MCF 10A (cell line): ENCODE measurements at regions of chr20 and their contacts with region 1.

Region 1: GRCh38 chr20:50070991-50071888 is 41.7 kb downstream of the UBE2V1 start:
- DNase-seq: peak; percentile 82
- H3K4me3 Mint-ChIP-seq: peak overlapping the region; percentile 50
- H3K27ac Mint-ChIP-seq: no peak overlapping the region
- H3K4me1 Mint-ChIP-seq: peaks cover 6% of the 10 kb centered on the region
- H3K27me3 Mint-ChIP-seq: no peaks in the 10 kb centered on the region
- CTCF ChIP-seq: peak; percentile 98

Region 2: GRCh38 chr20:49948809-49949548 is 122.3 kb before region 1 on chr20:
- CTCF ChIA-PET with region 1: interaction called, 10 read pairs
- POLR2A ChIA-PET with region 1: no interaction called
- intact Hi-C with region 1: no loop called
- DNase-seq: no peak
- H3K4me3 Mint-ChIP-seq: no peak overlapping the region
- H3K27ac Mint-ChIP-seq: no peak overlapping the region
- H3K4me1 Mint-ChIP-seq: peaks cover 11% of the 10 kb centered on the region
- H3K27me3 Mint-ChIP-seq: no peaks in the 10 kb centered on the region
- CTCF ChIP-seq: no peak

Region 3: GRCh38 chr20:49989234-49990065 is 81.8 kb before region 1 on chr20:
- CTCF ChIA-PET with region 1: interaction called, 78 read pairs
- POLR2A ChIA-PET with region 1: no interaction called
- intact Hi-C with region 1: no loop called
- DNase-seq: no peak
- H3K4me3 Mint-ChIP-seq: no peak overlapping the region
- H3K27ac Mint-ChIP-seq: no peak overlapping the region
- H3K4me1 Mint-ChIP-seq: peaks cover 4% of the 10 kb centered on the region
- H3K27me3 Mint-ChIP-seq: no peaks in the 10 kb centered on the region
- CTCF ChIP-seq: no peak

Region 4: DNA sequence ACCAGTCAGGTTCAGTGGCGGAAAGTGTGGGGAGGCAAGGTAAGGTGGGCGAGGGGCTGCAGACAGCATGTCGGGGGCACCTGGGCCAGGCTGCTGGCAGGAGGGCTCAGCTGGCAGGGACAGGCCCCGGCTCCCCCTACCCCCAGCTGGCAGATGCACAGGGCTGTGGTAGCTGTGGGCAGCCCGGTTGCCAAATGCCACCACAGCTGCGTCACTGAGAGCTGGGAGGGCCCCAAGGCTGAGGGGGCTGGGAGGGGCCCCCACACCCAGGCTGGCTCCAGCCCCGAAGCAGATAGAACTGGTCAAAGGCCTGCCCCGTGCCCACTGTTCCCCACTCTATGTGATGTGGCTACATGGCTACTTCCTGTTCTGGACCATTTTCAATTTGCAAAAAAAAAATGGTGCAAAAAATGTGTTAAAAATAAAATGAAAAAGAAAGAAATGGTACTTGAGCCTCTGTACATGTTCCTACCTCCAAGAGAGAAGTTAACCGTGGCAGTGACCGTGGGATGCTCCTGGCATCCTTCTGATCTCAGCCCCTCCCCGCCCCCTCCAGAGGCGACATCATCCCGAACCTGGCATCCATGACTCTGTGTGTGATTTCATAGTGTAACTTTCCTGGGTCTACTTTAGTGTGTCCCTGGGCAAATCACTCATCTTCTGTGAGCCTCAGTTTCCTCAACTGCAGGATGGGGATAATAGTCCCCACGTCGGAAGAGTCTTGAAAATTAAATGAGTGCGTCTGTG is 22.6 kb before region 1 on chr20:
- CTCF ChIA-PET with region 1: interaction called, 12 read pairs
- POLR2A ChIA-PET with region 1: no interaction called
- intact Hi-C with region 1: no loop called
- DNase-seq: peak; percentile 64
- H3K4me3 Mint-ChIP-seq: no peak overlapping the region
- H3K27ac Mint-ChIP-seq: no peak overlapping the region
- H3K4me1 Mint-ChIP-seq: no peaks in the 10 kb centered on the region
- H3K27me3 Mint-ChIP-seq: no peaks in the 10 kb centered on the region
- CTCF ChIP-seq: no peak

Region 5: GRCh38 chr20:50095476-50096078 is 24.3 kb after region 1 on chr20:
- CTCF ChIA-PET with region 1: interaction called, 21 read pairs
- POLR2A ChIA-PET with region 1: no interaction called
- intact Hi-C with region 1: no loop called
- DNase-seq: no peak
- H3K4me3 Mint-ChIP-seq: no peak overlapping the region
- H3K27ac Mint-ChIP-seq: no peak overlapping the region
- H3K4me1 Mint-ChIP-seq: peaks cover 23% of the 10 kb centered on the region
- H3K27me3 Mint-ChIP-seq: no peaks in the 10 kb centered on the region
- CTCF ChIP-seq: no peak

Region 6: GRCh38 chr20:50126691-50127116 is 55.5 kb after region 1 on chr20:
- CTCF ChIA-PET with region 1: no interaction called
- POLR2A ChIA-PET with region 1: no interaction called
- intact Hi-C with region 1: no loop called
- DNase-seq: no peak
- H3K4me3 Mint-ChIP-seq: no peak overlapping the region
- H3K27ac Mint-ChIP-seq: peak overlapping the region; percentile 36
- H3K4me1 Mint-ChIP-seq: peaks cover 6% of the 10 kb centered on the region
- H3K27me3 Mint-ChIP-seq: no peaks in the 10 kb centered on the region
- CTCF ChIP-seq: no peak